ENCODE measurements at regions of chr12 and their contacts with region 1.

Region 1: DNA sequence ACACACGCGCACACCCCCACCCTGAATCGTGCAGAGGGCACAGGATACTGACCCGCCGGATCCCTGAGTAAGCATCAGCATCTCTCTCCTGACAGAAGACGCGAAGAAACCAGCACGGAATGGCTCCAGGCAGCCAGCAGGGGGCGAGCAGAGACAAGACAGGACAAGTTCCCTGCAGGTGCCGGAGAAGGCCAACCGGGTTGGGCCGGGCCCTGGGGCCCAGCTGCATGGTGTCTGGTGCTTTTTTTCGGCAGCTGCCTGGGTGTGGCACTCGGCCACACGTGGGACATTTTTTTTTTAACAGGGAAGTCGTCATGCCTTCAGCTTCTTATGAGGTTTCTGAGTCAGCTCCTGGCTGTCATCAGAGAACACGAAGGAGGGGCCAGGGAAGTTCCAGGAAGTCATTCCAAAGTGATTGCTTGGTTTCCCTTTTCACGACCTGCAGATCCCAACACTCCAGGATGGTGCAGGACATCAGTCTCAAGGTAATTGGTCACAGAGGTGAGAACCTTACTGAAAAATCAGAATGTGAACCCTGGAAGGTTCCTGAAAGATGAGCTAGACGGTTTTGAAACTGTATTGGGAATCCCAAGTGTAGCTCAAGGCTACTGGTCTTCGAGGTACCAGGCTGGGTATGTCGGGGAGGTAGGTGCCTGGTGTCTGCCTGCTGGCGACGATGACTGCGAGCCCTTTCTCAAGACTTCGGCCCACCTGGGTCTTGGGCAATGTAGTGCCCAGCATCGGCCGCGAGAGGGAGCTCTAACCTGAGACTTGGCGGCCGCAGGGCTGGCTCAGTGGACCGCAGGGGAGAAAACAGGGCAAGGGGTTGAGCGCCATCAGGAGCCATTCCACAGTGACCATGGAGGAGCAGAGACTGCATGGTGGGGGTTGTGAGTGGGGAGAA is 190.8 kb upstream of the PRMT8 start:
- DNase-seq: peak; percentile 89
- H3K4me3 Mint-ChIP-seq: no peak overlapping the region
- H3K27ac Mint-ChIP-seq: peak overlapping the region; percentile 60
- H3K4me1 Mint-ChIP-seq: peaks cover 10% of the 10 kb centered on the region
- H3K27me3 Mint-ChIP-seq: peaks cover 50% of the 10 kb centered on the region

Region 2: GRCh38 chr12:3187846-3188770 is 112.1 kb before region 1 on chr12:
- CTCF ChIA-PET with region 1: no interaction called
- DNase-seq: no peak
- H3K4me3 Mint-ChIP-seq: no peak overlapping the region
- H3K27ac Mint-ChIP-seq: no peak overlapping the region
- H3K4me1 Mint-ChIP-seq: no peaks in the 10 kb centered on the region
- H3K27me3 Mint-ChIP-seq: peaks cover 29% of the 10 kb centered on the region

Region 3: GRCh38 chr12:3275171-3276041 is 24.8 kb before region 1 on chr12:
- CTCF ChIA-PET with region 1: interaction called, 22 read pairs
- DNase-seq: peak; percentile 78
- H3K4me3 Mint-ChIP-seq: no peak overlapping the region
- H3K27ac Mint-ChIP-seq: no peak overlapping the region
- H3K4me1 Mint-ChIP-seq: peaks cover 2% of the 10 kb centered on the region
- H3K27me3 Mint-ChIP-seq: peaks cover 22% of the 10 kb centered on the region

Region 4: GRCh38 chr12:3288690-3289089 is 11.5 kb before region 1 on chr12:
- CTCF ChIA-PET with region 1: interaction called, 31 read pairs
- DNase-seq: no peak
- H3K4me3 Mint-ChIP-seq: no peak overlapping the region
- H3K27ac Mint-ChIP-seq: no peak overlapping the region
- H3K4me1 Mint-ChIP-seq: no peaks in the 10 kb centered on the region
- H3K27me3 Mint-ChIP-seq: peaks cover 21% of the 10 kb centered on the region

Region 5: DNA sequence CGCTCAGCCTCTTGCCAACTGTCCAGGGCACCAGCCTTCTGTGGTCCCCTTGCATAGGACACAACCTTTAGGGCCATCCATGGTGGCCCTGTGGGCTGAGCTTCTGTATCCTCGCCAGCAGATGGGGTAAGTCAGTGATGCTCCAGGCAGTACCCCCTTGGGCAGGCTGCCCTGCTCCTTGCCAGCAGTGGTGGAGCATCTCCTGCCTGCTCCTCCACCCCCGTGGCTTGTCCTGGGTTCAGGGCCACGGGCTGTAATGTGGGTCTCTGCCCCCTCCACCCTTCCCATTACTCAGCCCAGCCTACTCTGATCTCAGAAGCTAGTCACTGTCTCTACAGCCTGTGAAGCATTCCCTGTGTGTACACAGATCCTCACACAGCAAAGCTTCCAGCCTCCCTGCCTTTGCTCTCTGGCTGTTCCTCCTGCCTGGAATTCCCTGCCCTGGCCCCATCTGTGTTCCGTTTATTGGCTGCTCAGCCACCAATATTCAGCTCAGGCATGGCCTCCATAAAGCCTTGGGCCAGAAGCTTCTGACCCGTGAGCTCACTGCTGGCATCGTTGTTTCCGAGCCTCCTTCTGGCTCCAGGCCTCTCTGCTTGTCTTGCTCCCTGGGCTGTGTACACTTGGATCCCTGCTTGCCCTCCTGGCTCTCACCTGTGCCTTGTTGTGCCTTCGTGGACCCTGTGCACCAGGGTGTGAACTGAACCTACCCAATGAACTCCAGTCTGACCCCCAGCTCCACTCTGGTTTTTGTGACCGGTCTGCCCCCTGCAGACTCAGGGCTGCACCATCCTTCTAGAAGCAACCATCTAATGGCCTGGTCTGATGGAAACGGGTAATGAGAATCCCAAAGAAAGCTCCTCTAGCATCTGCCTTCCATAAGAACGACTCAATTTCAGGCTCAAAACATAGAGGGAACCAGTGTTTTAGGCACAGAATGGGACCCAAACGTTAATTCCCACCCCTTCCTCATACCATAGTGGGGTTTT is 13.8 kb after region 1 on chr12:
- CTCF ChIA-PET with region 1: interaction called, 50 read pairs
- DNase-seq: peak; percentile 45
- H3K4me3 Mint-ChIP-seq: no peak overlapping the region
- H3K27ac Mint-ChIP-seq: no peak overlapping the region
- H3K4me1 Mint-ChIP-seq: no peaks in the 10 kb centered on the region
- H3K27me3 Mint-ChIP-seq: peaks cover 8% of the 10 kb centered on the region

Region 6: GRCh38 chr12:3777206-3777809 is 477.1 kb after region 1 on chr12:
- CTCF ChIA-PET with region 1: interaction called, 36 read pairs
- DNase-seq: no peak
- H3K4me3 Mint-ChIP-seq: no peak overlapping the region
- H3K27ac Mint-ChIP-seq: no peak overlapping the region
- H3K4me1 Mint-ChIP-seq: peaks cover 7% of the 10 kb centered on the region
- H3K27me3 Mint-ChIP-seq: no peaks in the 10 kb centered on the region

Region 7: GRCh38 chr12:3803865-3804472 is 503.8 kb after region 1 on chr12:
- CTCF ChIA-PET with region 1: interaction called, 84 read pairs
- DNase-seq: peak; percentile 82
- H3K4me3 Mint-ChIP-seq: no peak overlapping the region
- H3K27ac Mint-ChIP-seq: peak overlapping the region; percentile 5
- H3K4me1 Mint-ChIP-seq: peaks cover 4% of the 10 kb centered on the region
- H3K27me3 Mint-ChIP-seq: no peaks in the 10 kb centered on the region